Cardiac septum (tissue), 1 donor: ENCODE measurements at regions of chr4 and their contacts with region 1.

Region 1: GRCh38 chr4:139809757-139810140 is 144.1 kb downstream of the MGST2 start:
- DNase-seq: no peak

Region 2: GRCh38 chr4:139770361-139770760 is 39.4 kb before region 1 on chr4:
- intact Hi-C with region 1: loop called (anchors 2 kb)
- DNase-seq: peak; percentile 83